Posterior vena cava (tissue), 2 donors: ENCODE measurements at regions of chr3 and their contacts with region 1.

Region 1: DNA sequence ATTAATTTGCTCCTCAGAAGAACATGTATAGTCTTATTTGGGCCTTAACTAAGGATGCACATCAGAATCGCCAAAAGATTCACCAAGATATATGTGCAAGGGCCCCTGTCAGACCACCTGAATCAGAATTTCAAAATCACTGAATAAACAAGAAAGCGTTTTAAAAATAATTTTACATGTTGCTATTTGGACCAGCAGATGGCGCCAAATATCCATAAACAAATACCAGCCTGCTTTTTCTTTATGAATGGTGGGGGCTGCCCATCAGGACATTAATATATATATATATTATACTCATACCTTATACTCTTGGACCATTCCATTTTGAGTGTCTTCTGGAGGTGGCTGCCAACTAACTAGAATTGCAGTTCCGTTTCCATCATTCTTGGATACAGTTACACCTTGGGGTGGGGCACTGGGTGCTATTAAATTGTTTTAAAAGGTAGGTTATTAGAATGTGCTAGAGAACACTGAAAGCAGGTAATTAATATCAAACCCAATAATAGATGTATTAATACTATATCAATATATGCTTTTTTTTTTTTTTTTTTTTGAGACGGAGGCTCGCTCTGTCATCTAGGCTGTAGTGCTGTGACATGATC is 1108.3 kb downstream of the ROBO1 start:
- DNase-seq: no peak

Region 2: DNA sequence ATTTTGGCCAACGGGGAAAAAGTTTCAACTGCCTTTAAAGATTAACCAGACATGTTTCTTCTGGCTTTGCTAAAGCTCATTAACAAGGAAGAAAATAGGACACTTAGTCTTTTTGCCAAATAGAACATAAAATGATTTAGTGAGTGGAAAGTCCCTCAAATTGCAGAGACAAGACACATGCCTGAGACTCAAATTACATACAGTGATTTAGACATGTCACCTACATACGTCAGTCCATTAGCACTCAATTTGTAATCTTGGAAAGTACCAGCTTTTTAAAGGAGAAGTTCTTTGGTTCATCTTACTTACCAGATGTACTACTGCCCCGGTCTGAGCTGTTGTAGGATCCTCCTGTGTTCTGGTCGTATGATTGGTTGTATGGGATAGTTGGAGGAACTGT is 25.9 kb before region 1 on chr3:
- intact Hi-C with region 1: no loop called
- DNase-seq: no peak

Region 3: DNA sequence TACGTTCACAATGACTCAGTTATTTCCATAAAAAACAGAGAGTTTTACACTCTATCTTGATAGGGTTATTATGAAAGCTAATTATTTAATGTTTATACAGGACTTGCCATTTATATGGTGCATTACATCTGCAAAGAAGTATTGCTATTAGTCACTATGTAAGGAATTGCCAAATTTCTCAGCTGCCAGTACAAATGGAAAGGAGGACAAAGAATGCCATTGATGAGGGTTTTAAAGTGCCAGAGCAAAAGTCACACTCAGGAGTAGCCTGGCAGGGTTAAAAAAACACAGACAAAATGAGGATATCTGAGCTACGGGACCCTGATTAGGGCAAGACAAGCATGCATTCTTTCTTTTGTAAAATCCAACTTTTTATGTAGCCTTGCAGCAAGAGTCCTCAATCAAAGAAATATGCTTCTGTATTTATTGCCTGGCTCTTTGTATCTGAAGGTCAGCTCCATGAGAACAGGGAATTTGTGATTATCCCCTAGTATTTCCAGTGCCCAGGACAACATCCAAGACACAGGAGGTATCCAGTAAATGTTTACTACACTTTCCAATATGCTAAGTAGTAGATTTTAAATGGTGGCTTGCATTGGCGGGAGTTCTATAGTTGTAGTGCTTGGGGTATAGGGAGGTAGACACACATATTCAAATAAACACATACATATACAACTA is 94.7 kb after region 1 on chr3:
- intact Hi-C with region 1: no loop called
- DNase-seq: no peak

Region 4: DNA sequence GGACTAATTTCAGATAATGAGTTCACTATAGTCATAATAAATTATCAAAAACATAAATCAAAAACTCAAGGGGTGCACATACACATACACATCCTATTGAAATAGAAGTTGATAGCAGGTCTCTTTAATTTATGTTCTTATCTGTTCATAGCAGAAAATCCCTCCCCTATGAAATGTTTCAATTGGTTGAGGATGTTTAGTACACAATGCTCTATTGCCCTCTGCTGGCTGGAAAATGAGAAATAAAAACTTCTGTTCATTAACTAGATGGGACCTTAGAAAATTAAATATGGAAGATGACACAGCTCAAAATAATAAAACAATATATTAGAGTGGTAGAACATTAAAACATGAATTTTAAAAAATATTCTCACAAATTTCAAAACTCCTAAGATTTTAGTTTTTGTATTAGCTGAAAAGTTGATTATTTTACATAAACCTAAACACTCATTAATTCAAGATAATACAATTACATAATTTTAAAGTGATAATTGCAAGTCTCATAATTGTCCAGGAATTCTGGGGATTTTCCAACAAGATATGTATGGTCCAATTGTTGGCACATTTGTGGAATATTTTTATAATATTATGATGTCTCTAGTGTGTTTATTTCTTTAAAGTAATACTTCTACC is 373.3 kb after region 1 on chr3:
- intact Hi-C with region 1: loop called (anchors 10 kb)
- DNase-seq: no peak

Region 5: DNA sequence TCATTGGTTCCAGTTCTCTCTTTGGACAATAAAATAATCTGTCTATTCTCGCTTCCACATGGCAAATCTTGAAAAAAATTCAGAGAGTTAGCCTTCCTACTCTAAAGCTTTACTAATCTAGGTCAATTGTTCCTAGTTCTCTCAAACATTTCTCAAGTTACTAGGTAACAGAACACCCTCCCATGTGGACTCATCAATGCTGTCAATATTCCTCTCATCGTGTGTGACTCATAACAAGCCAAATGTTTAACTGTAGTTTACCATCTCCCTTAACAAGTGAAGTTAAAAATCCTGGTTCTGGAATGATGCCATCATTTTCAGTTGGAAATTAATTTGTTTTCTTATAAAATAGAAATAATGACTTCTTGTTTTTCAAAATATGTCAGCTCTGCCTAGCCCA is 669.7 kb after region 1 on chr3:
- intact Hi-C with region 1: no loop called
- DNase-seq: no peak